Activated CD4-positive, alpha-beta T cell treated with anti-CD3 and anti-CD28 coated beads for 36 hours (primary cell): ENCODE measurements at regions of chr22 and their contacts with region 1.

Region 1: GRCh38 chr22:46035742-46036557 is 59.0 kb upstream of the WNT7B start:
- DNase-seq: peak; percentile 99
- ATAC-seq: peak; percentile 95
- H3K4me3 Mint-ChIP-seq: peak overlapping the region; percentile 80
- H3K27ac Mint-ChIP-seq: peak overlapping the region; percentile 91
- H3K4me1 Mint-ChIP-seq: peaks cover 15% of the 10 kb centered on the region
- H3K27me3 Mint-ChIP-seq: no peaks in the 10 kb centered on the region

Region 2: DNA sequence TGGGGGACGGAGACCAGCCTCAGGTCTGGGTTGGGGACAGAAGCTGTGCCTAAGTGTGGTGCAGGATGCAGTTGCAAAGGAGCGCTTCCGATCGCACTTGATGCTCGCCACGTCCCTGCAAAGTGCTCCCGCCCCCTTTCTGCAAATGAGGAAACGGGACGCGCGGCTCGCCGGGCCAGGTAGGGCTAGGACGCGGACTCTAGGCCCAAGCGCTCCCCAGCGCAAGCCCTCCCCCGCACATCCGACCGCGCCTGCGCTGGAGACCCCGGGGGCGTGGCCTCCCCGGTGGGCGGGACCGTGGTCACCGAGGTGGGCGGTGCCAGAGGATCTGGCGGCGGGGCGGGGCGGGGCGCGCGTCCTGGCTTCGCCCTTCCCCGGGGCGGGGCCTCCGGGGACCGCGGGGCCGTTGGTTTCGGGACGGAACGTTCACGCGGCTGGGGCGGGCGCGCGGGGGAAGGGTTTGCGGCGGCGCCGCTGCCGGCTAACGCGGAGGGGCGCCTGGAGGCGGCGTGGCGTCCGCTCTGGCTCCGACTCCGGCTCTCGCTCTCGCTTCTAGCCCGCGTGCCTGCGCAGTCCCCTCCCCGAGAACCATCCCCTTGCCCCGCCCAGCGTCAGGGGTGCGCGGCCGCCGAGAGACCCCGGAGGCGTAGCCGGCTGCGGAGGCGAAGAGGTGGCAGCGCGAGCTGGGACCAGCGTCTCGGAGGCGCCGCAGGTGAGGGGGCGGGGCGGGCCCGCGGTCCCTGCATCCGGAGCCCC is 726.3 kb before region 1 on chr22 and contains the start of gene FAM118A:
- CTCF ChIA-PET with region 1: no interaction called
- POLR2A ChIA-PET with region 1: no interaction called
- intact Hi-C with region 1: loop called in 1 of 2 experiments (anchors 1 kb)
- DNase-seq: peak; percentile 98
- ATAC-seq: peak; percentile 86
- H3K4me3 Mint-ChIP-seq: peak within 1 kb of the TSS; percentile 80
- H3K27ac Mint-ChIP-seq: peak within 1 kb of the TSS; percentile 97
- H3K4me1 Mint-ChIP-seq: peaks cover 46% of the 10 kb centered on the region
- H3K27me3 Mint-ChIP-seq: no peaks in the 10 kb centered on the region
- total RNA-seq, gene FAM118A: 25.5 to 29.0 TPM

Region 3: GRCh38 chr22:46013460-46014416 is 22.2 kb before region 1 on chr22:
- CTCF ChIA-PET with region 1: interaction called, 61 read pairs
- POLR2A ChIA-PET with region 1: interaction called, 4 read pairs
- intact Hi-C with region 1: loop called (anchors 1 kb)
- DNase-seq: peak; percentile 96
- ATAC-seq: peak; percentile 99
- H3K4me3 Mint-ChIP-seq: peak overlapping the region; percentile 80
- H3K27ac Mint-ChIP-seq: peak overlapping the region; percentile 86
- H3K4me1 Mint-ChIP-seq: peaks cover 4% of the 10 kb centered on the region
- H3K27me3 Mint-ChIP-seq: no peaks in the 10 kb centered on the region

Region 4: DNA sequence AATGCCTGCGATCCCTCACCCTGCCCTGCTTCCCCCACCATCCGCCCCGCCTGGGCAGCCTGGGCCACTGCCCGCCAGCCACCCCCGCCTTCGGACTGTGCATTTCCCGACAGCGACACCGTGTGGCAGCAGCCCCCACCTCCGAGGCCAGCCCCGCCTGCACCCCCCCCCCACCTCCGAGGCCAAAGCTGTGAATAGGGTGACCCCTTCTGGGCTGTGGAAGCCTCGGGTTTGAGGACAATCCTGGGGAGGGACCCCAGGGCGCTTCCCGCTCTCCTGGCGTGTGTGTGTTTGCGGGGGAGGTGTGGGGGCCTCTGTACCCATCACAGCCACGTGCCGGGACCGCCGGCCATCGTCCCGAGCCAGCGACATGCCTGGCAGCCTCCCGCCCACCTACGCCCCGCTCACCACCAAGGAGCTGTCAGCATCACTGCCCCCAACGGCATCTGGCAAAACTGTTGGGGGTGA is 80.6 kb after region 1 on chr22:
- CTCF ChIA-PET with region 1: interaction called, 3 read pairs
- POLR2A ChIA-PET with region 1: interaction called, 3 read pairs
- intact Hi-C with region 1: loop called in 1 of 2 experiments (anchors 1 kb)
- DNase-seq: peak; percentile 95
- ATAC-seq: peak; percentile 96
- H3K4me3 Mint-ChIP-seq: no peak overlapping the region
- H3K27ac Mint-ChIP-seq: no peak overlapping the region
- H3K4me1 Mint-ChIP-seq: peaks cover 3% of the 10 kb centered on the region
- H3K27me3 Mint-ChIP-seq: no peaks in the 10 kb centered on the region

Region 5: GRCh38 chr22:46296257-46297150 is 260.6 kb after region 1 on chr22 and contains the start of gene GTSE1:
- CTCF ChIA-PET with region 1: no interaction called
- POLR2A ChIA-PET with region 1: no interaction called
- intact Hi-C with region 1: loop called (anchors 1 to 10 kb)
- DNase-seq: peak; percentile 99
- ATAC-seq: peak; percentile 99
- H3K4me3 Mint-ChIP-seq: peak within 1 kb of the TSS; percentile 90
- H3K27ac Mint-ChIP-seq: peak within 1 kb of the TSS; percentile 93
- H3K4me1 Mint-ChIP-seq: peaks cover 35% of the 10 kb centered on the region
- H3K27me3 Mint-ChIP-seq: peaks cover 4% of the 10 kb centered on the region
- total RNA-seq, gene GTSE1: 39.9 to 42.4 TPM

Region 6: GRCh38 chr22:46674367-46674781 is 638.4 kb after region 1 on chr22:
- CTCF ChIA-PET with region 1: no interaction called
- POLR2A ChIA-PET with region 1: no interaction called
- intact Hi-C with region 1: loop called in 1 of 2 experiments (anchors 5 kb)
- DNase-seq: peak; percentile 99
- ATAC-seq: peak; percentile 94
- H3K4me3 Mint-ChIP-seq: peak overlapping the region; percentile 85
- H3K27ac Mint-ChIP-seq: peak overlapping the region; percentile 96
- H3K4me1 Mint-ChIP-seq: peaks cover 49% of the 10 kb centered on the region
- H3K27me3 Mint-ChIP-seq: no peaks in the 10 kb centered on the region